ENCODE measurements at regions of chr17 and their contacts with region 1.

Region 1: DNA sequence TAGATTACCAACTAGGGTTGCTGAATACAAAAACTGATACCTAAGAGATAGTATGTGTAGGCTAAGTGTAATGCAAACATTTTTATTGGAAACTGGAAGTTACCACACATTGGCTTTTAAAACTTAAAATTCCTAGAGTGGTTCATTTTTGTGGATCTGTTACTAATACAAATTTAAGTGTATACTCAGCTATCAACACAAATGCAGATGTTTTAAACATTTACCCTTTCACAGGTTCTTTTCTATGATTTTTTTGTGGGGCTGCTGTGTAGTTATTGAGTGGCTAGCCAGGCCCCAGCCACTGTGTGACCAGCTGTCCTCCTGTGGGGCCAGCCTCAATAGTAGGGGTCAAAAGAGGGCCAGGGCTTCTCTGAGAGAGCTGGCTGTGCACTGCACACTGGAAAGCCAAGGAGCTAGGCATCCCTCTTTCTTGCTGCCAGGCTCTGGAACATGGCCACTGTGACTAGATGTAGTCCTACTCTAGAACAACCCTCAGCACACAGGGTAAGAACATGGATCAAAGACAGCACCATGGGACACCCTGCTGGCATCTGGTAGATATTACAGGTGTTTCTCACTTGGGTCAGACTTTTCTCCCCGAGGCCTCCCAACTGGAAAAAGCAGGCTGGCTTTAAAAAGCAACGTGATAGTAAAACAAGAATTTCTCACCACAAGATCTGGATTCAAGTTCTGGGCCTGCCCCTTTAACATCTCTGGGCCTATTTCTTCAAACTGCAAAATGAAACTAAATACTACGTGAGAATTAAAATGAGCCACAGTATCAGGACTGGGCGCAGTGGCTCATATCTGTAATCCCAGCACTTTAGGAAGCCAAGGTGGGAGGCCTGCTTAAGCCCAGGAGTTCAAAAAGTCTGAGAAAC is 7.3 kb upstream of the VEZF1 start:
- DNase-seq: peak; percentile 61
- CTCF ChIP-seq: peak; percentile 62

Region 2: GRCh38 chr17:57892146-57892828 is 103.0 kb before region 1 on chr17:
- in situ Hi-C with region 1: loop called (anchors 10 kb)
- DNase-seq: peak; percentile 88
- CTCF ChIP-seq: peak; percentile 97

Measured in GM13977 (cell line).